PC-3 (cell line): ENCODE measurements at regions of chr2 and their contacts with region 1.

Region 1: GRCh38 chr2:75523313-75524275 is 37.1 kb downstream of the EVA1A start:
- DNase-seq: peak; percentile 98
- ATAC-seq: peak; percentile 82
- H3K4me3 ChIP-seq: 0 out of 2 replicates have a peak overlapping the region, but pooled peaks have one; percentile 12
- H3K27ac ChIP-seq: peak overlapping the region; percentile 92
- H3K4me1 ChIP-seq: peaks cover 68% of the 10 kb centered on the region
- H3K27me3 ChIP-seq: no peaks in the 10 kb centered on the region
- CTCF ChIP-seq: no peak

Region 2: GRCh38 chr2:75157430-75157829 is 366.2 kb before region 1 on chr2:
- CTCF ChIA-PET with region 1: interaction called, 15 read pairs
- POLR2A ChIA-PET with region 1: no interaction called
- intact Hi-C with region 1: no loop called
- DNase-seq: peak; percentile 60
- ATAC-seq: peak; percentile 67
- H3K4me3 ChIP-seq: no peak overlapping the region
- H3K27ac ChIP-seq: no peak overlapping the region
- H3K4me1 ChIP-seq: peaks cover 17% of the 10 kb centered on the region
- H3K27me3 ChIP-seq: peaks cover 2% of the 10 kb centered on the region; the same call in 1 of the 2 replicates
- CTCF ChIP-seq: peak; percentile 68

Region 3: DNA sequence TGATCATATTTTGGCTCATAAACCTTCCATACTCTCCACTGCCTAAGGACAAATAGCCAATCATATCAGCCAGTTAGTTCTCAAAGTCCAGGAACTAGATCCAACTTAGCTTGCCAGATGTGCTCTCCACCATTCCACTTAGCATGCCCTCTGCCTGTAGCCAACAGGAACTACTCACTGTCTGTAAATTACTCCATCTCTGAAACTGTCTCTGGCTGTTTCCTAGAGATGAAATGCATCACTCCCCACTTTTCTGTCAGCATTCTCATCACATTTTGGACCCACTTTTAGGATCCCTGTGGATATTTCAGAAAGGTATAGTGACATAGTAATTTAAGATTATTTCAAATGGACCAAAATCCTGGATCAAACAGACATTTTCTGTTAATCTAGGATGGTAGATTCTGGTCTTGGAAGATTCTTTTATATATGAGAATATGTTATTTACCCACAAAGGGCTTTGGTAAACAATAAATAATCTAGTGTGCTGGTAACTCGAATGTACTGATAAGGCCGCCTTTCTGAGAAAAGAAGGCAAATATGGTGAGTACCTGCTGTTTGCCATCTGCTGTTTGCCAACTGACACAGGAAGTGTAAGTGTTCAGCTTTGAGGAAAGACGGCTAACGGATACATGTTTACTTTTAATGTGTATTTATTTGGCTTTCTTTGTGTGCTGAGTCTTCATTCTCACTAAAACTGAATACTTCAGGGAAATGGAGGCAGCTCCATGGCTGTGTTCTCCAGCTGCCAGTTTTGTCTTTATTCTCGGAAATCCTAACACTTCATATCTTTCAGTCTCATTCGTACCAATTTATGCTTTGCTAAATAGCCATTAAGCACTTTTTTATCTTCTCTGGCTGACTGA is 42.4 kb before region 1 on chr2:
- CTCF ChIA-PET with region 1: no interaction called
- POLR2A ChIA-PET with region 1: no interaction called
- intact Hi-C with region 1: loop called (anchors 5 kb)
- DNase-seq: peak; percentile 32
- ATAC-seq: peak; percentile 66; the same call in 1 of the 2 replicates
- H3K4me3 ChIP-seq: no peak overlapping the region
- H3K27ac ChIP-seq: no peak overlapping the region
- H3K4me1 ChIP-seq: 0 out of 2 replicates have a peak, but pooled peaks cover 6% of the 10 kb centered on the region
- H3K27me3 ChIP-seq: no peaks in the 10 kb centered on the region
- CTCF ChIP-seq: peak; percentile 58

Region 4: DNA sequence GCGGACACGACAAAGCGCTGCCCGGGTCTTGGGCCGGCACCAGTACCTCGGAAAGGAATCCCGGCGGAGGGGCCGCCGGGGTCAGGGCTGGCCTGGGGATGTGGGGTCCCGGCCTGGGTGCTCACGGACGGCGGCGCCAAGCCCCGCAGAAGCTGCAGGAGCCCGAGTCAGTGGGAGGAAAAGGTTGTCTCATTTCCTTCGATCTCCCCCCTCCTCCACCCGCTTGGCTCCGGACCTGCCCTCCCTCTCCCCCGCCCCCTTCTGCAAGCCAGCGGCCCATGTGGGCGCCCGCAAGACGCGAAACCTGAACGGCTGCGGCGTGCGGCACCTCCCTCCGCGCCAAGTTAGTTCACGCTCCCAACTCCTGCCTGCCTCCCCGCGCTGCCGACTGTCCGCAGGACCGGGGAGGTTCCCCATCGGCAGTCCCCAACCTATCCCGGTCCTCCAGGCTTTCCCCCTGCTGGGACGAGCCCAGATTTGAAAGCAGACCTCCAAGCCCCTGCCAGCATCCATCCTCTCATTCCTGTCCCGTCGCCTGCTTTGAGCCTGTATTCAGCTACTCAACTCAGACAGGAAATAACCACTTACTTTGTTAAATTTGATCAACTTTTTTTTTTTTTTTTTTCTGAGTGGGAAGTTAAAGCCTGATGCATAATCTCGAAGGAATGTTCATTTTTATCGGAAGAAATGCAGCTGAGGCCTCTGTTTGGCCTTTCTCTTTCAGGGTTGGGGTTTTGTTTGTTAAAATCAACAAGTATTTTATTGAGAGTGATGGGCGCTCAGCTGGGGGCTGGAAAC is 37.4 kb after region 1 on chr2 and contains the start of gene EVA1A:
- CTCF ChIA-PET with region 1: no interaction called
- POLR2A ChIA-PET with region 1: no interaction called
- intact Hi-C with region 1: loop called (anchors 2 kb)
- DNase-seq: peak; percentile 72
- ATAC-seq: peak; percentile 70
- H3K4me3 ChIP-seq: peak within 1 kb of the TSS; percentile 86
- H3K27ac ChIP-seq: peak within 1 kb of the TSS; percentile 48
- H3K4me1 ChIP-seq: peaks cover 25% of the 10 kb centered on the region
- H3K27me3 ChIP-seq: no peaks in the 10 kb centered on the region
- CTCF ChIP-seq: no peak
- total RNA-seq, gene EVA1A: 48.9 and 70.8 TPM in 2 replicates